Aorta (tissue), 5 donors: ENCODE measurements at regions of chr5 and their contacts with region 1.

Region 1: GRCh38 chr5:97162045-97162444 is 19.6 kb upstream of the LIX1 start:
- DNase-seq: no peak
- ATAC-seq: peak; percentile 67
- H3K4me3 ChIP-seq: no peak overlapping the region
- H3K27ac ChIP-seq: no peak overlapping the region
- H3K4me1 ChIP-seq: no peaks in the 10 kb centered on the region
- H3K27me3 ChIP-seq: no peaks in the 10 kb centered on the region

Region 2: DNA sequence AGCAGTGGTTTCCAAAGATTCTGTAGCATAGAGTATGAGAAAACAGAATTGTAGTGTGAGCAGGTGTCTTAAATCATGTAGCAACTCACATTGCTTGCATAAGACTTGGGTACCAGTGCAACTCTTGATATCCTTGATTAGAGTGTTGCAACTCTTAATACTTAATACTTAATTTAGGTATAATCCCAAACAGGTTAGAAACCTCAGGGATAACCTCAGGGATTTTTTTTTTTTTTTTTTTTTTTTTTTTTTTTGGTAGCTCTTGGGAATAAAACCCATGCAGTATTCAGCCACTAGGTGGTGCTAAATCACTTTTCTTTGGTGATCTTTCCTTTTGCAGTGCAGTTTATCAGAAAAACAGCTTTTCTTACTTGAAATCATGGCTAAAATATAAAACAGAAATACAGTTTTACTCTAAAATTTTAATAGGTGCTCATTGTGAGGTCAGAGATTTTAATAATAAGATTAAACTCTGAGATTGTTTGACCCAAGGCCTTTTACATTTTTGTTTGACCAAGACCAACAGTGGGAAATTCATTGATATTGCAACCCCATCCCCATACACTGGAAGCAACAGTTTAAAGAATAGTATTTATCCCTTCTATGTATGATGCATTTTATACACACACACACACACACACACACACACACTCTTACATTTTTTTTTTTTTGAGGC is 409.6 kb before region 1 on chr5:
- intact Hi-C with region 1: loop called (anchors 5 to 10 kb)
- DNase-seq: no peak
- ATAC-seq: peak; percentile 60
- H3K4me3 ChIP-seq: no peak overlapping the region
- H3K27ac ChIP-seq: no peak overlapping the region
- H3K4me1 ChIP-seq: no peaks in the 10 kb centered on the region
- H3K27me3 ChIP-seq: no peaks in the 10 kb centered on the region

Region 3: GRCh38 chr5:96868603-96869371 is 293.3 kb before region 1 on chr5:
- intact Hi-C with region 1: loop called (anchors 2 to 5 kb)
- DNase-seq: no peak
- ATAC-seq: peak; percentile 74
- H3K4me3 ChIP-seq: no peak overlapping the region
- H3K27ac ChIP-seq: no peak overlapping the region
- H3K4me1 ChIP-seq: no peaks in the 10 kb centered on the region
- H3K27me3 ChIP-seq: no peaks in the 10 kb centered on the region

Region 4: GRCh38 chr5:97009212-97009898 is 152.7 kb before region 1 on chr5:
- intact Hi-C with region 1: loop called (anchors 10 kb)
- DNase-seq: no peak
- ATAC-seq: no peak
- H3K4me3 ChIP-seq: no peak overlapping the region
- H3K27ac ChIP-seq: no peak overlapping the region
- H3K4me1 ChIP-seq: no peaks in the 10 kb centered on the region
- H3K27me3 ChIP-seq: no peaks in the 10 kb centered on the region

Region 5: DNA sequence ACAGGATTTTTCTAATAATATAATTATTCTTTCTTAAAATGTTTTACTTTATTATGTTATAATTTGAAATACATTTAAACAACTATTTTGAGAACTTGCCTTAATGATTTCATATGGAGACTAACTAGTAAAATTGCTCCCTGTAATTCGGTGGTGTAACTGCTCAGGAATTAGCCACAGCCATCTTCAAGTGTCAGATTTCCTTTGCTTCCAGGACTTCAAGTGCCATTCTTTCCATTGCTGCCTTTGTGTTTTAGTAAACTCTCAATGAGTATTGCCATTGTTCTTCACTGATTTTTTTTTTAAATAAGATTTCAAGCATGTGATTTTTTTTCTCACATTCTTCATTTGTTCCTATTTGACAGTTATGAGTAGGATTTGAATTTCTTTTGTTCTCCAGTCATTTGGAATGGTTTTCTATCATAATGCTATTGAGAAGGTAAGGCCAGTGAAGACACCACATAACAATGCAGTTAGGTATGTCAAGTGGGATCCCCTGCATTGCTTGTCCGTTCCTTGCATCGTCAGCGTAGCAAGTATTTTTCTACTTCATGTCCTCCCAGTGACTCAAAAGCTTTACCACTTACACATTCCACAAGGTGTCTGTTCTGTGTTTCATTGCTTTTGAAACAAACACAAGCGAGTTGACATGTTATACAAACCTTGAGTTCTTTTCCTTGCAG is 142.5 kb before region 1 on chr5:
- intact Hi-C with region 1: loop called in 1 of 2 experiments (anchors 10 kb)
- DNase-seq: no peak
- ATAC-seq: no peak
- H3K4me3 ChIP-seq: no peak overlapping the region
- H3K27ac ChIP-seq: no peak overlapping the region
- H3K4me1 ChIP-seq: no peaks in the 10 kb centered on the region
- H3K27me3 ChIP-seq: no peaks in the 10 kb centered on the region

Region 6: GRCh38 chr5:97044052-97044451 is 118.0 kb before region 1 on chr5:
- intact Hi-C with region 1: loop called in 1 of 2 experiments (anchors 2 kb)
- DNase-seq: no peak
- ATAC-seq: peak; percentile 40
- H3K4me3 ChIP-seq: no peak overlapping the region
- H3K27ac ChIP-seq: no peak overlapping the region
- H3K4me1 ChIP-seq: no peaks in the 10 kb centered on the region
- H3K27me3 ChIP-seq: no peaks in the 10 kb centered on the region